Activated T-helper 1 cell treated with anti-CD3 and anti-CD28 coated beads, Interleukin-12 subunit alpha, Interleukin-12 subunit beta, Interleukin-2, Interleukin-4 antibody, amounts not matched to agents 30 ng/mL and 10 ng/mL and 1 ng/mL, durations not matched to agents 14 hours and 24 hours and 36 hours (primary cell): ENCODE measurements at regions of chr1 and their contacts with region 1.

Region 1: DNA sequence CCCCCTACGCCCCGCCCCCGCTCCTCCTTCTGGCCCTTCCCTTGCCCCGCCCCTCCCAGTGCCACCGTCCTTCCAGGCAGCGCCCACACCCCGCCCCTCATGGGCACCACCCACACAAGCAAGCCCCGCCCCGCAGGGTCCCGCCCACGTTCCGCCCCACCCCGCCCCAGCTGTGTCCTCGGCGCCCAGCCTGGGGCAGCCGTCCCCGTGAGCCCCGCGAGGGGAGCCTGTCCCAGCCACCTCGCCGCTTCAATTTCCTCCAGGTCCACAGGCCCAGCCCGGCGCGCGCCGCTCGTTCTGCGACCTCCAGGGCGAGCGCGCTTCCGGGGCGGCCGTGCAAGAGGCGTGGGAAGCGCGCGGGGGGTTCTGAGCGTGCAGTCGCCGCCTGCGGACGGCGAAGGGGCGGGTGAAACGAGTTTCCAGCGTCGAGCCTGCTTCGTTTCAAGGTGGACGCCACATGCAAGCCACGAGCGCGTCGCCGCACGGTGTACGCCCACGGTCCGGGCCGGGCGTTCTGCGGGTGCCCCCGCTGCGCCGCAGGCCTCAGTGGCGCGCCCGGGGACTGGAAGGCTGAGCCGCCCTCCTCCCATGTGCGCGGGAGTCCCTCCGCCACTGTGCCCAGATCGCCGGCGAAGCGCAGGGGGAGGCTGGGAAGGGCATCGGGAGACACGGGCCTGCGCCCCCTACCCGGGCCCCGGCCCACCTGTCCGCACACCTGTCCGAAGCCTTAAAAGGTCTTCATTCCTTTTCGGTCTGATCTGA is 10.8 kb upstream of the FAAP20 start:
- DNase-seq: peak; percentile 85
- H3K4me3 Mint-ChIP-seq: peak overlapping the region; percentile 37
- H3K27ac Mint-ChIP-seq: no peak overlapping the region
- H3K4me1 Mint-ChIP-seq: no peaks in the 10 kb centered on the region
- H3K27me3 Mint-ChIP-seq: no peaks in the 10 kb centered on the region

Region 2: DNA sequence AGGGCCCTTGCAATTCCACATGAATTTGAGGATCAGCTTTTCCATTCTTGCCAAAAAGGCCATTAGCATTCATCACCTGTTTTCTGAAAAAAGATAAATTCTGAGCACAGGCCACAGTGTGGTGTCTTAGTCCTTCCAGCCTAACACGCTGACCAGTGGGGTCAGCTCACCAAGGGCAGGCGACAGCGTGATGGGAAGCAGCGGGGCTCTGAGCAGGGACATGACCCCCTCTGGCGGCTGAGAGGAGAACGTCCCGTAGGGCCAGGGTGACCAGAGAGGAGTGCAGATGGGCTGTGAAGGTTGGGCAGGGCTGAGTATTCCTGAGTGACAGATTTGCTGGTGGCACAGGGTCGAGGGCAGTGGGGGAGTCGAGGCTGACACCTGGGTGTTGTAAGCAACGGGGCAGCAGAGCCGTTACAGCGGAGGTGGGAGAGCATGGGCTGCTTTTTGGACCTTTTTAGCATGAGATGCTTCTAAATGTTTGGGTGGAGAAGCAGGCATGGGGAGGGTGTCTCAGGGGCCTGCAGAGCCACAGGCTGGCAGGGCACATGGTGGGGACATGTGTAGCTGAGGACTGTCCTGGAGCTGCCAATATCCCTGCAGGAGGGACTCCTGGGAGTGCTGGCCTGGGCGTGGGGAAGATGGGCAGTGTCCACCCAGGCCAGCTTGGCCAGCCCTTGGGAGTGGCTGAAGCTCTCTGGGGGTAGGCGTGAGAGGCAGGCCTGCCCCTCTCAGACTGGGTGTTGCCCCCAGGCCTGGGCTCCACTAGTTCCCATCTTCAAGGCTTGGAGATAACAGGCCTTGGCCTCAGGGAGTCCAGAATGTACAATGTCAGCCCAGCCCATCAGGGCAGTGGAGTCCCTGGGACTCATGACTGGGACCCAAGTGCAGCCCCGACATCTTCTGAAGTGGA is 298.9 kb before region 1 on chr1:
- intact Hi-C with region 1: loop called (anchors 2 kb)
- DNase-seq: peak; percentile 61
- H3K4me3 Mint-ChIP-seq: peak overlapping the region; percentile 68
- H3K27ac Mint-ChIP-seq: peak overlapping the region; percentile 76
- H3K4me1 Mint-ChIP-seq: peaks cover 16% of the 10 kb centered on the region
- H3K27me3 Mint-ChIP-seq: peaks cover 2% of the 10 kb centered on the region

Region 3: GRCh38 chr1:1919304-1920056 is 285.9 kb before region 1 on chr1:
- intact Hi-C with region 1: loop called (anchors 1 kb)
- DNase-seq: peak; percentile 99
- H3K4me3 Mint-ChIP-seq: peak overlapping the region; percentile 64
- H3K27ac Mint-ChIP-seq: peak overlapping the region; percentile 70
- H3K4me1 Mint-ChIP-seq: no peaks in the 10 kb centered on the region
- H3K27me3 Mint-ChIP-seq: peaks cover 2% of the 10 kb centered on the region

Region 4: GRCh38 chr1:2227346-2228153 is 22.2 kb after region 1 on chr1:
- intact Hi-C with region 1: loop called (anchors 1 kb)
- DNase-seq: peak; percentile 96
- H3K4me3 Mint-ChIP-seq: peak overlapping the region; percentile 73
- H3K27ac Mint-ChIP-seq: peak overlapping the region; percentile 80
- H3K4me1 Mint-ChIP-seq: peaks cover 26% of the 10 kb centered on the region
- H3K27me3 Mint-ChIP-seq: peaks cover 13% of the 10 kb centered on the region

Region 5: GRCh38 chr1:2255420-2256369 is 50.3 kb after region 1 on chr1:
- intact Hi-C with region 1: loop called (anchors 1 kb)
- DNase-seq: peak; percentile 73
- H3K4me3 Mint-ChIP-seq: no peak overlapping the region
- H3K27ac Mint-ChIP-seq: no peak overlapping the region
- H3K4me1 Mint-ChIP-seq: peaks cover 39% of the 10 kb centered on the region
- H3K27me3 Mint-ChIP-seq: no peaks in the 10 kb centered on the region

Region 6: DNA sequence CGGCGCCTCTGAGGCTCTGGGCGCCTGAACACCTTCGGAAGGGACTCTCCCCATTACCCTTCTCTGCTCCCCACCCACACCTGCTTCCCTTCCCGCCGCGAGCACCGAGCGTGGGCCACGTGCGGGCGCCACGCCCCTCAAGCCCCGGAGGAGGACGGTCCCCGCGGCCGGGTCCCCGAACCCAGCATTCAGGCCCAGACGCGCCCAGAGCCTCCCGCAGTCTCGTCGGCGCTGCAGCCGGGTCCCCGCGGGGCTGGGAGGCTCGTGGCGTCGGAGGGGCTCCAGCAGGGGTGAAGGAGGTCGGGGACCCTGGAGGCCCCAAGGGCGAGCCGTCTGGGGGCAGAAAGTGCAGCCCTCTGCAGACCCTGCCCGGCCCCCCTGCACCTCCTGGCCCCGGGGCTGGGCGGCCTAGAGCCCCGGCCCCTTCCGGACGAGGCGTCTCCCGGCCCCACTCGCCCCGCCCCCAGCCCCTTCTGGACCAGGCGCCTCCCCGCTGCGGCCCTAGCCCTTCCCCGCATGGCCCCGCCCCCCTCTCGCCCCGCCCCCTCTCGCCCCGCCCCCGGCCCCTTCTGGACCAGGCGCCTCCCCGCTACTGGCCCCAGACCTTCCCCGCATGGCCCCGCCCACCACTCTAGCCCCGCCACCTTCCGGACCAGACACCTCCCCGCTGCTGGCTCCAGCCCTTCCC is 1566.8 kb after region 1 on chr1:
- intact Hi-C with region 1: loop called (anchors 5 kb)
- DNase-seq: peak; percentile 80
- H3K4me3 Mint-ChIP-seq: peak overlapping the region; percentile 75
- H3K27ac Mint-ChIP-seq: peak overlapping the region; percentile 52
- H3K4me1 Mint-ChIP-seq: peaks cover 8% of the 10 kb centered on the region
- H3K27me3 Mint-ChIP-seq: peaks cover 9% of the 10 kb centered on the region